Left ventricle myocardium inferior (tissue), 1 donor: ENCODE measurements at regions of chr11 and their contacts with region 1.

Region 1: DNA sequence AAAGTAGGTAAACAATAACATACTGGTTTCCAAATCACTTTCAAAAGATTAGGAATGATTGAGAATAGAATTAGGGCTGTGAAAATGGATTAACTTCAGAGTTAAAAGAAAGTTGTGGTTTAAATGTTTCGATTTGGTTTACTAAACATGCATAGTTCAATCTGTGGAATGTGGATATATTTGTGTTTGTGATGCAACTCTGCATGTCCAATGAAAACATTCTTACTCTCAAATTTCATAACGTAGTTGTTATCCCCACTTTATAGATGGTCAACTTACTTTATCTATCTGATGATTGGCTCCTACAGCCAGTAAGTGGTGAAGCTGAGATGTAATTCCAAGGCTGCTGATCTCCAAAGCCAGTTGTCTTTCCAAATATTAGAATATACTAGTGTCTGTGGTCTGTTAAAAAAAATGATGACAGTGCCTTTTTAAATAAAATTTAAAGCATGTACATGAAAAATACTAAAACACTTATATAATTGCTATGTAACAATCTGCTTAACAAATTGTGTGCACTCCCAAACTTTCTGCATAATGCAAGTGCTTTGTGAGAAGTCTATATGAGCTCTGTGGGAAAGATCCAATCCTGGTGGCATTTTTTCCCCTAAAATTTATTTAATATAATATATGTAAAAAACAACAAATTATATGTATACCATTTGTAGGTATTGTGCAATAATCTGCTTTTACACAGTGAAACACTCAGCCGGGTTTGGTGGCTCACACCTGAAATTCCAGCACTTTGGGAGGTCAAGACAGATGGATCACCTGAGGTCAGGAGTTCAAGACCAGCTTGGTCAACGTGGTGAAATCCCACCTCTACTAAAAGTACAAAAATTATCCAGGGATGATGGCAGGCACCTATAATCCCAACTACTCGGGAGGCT is 9.7 kb upstream of the SIK3 start:
- DNase-seq: no peak
- H3K4me3 ChIP-seq: no peak overlapping the region
- H3K27ac ChIP-seq: peak overlapping the region; percentile 70
- H3K4me1 ChIP-seq: peaks cover 8% of the 10 kb centered on the region
- H3K27me3 ChIP-seq: no peaks in the 10 kb centered on the region
- CTCF ChIP-seq: no peak

Region 2: GRCh38 chr11:116787786-116788486 is 320.0 kb before region 1 on chr11 and contains the start of gene ZPR1:
- intact Hi-C with region 1: loop called (anchors 5 kb)
- DNase-seq: peak; percentile 88
- H3K4me3 ChIP-seq: peak within 1 kb of the TSS; percentile 85
- H3K27ac ChIP-seq: peak within 1 kb of the TSS; percentile 89
- H3K4me1 ChIP-seq: peaks cover 33% of the 10 kb centered on the region
- H3K27me3 ChIP-seq: no peaks in the 10 kb centered on the region
- CTCF ChIP-seq: peak; percentile 17
- total RNA-seq, gene ZPR1: 26.4 TPM

Region 3: GRCh38 chr11:116879800-116880625 is 227.9 kb before region 1 on chr11:
- intact Hi-C with region 1: loop called (anchors 2 kb)
- DNase-seq: no peak
- H3K4me3 ChIP-seq: no peak overlapping the region
- H3K27ac ChIP-seq: no peak overlapping the region
- H3K4me1 ChIP-seq: peaks cover 28% of the 10 kb centered on the region
- H3K27me3 ChIP-seq: no peaks in the 10 kb centered on the region
- CTCF ChIP-seq: peak; percentile 76

Region 4: GRCh38 chr11:116901211-116901610 is 206.7 kb before region 1 on chr11:
- intact Hi-C with region 1: no loop called
- DNase-seq: peak; percentile 73
- H3K4me3 ChIP-seq: no peak overlapping the region
- H3K27ac ChIP-seq: peak overlapping the region; percentile 47
- H3K4me1 ChIP-seq: peaks cover 36% of the 10 kb centered on the region
- H3K27me3 ChIP-seq: no peaks in the 10 kb centered on the region
- CTCF ChIP-seq: no peak

Region 5: DNA sequence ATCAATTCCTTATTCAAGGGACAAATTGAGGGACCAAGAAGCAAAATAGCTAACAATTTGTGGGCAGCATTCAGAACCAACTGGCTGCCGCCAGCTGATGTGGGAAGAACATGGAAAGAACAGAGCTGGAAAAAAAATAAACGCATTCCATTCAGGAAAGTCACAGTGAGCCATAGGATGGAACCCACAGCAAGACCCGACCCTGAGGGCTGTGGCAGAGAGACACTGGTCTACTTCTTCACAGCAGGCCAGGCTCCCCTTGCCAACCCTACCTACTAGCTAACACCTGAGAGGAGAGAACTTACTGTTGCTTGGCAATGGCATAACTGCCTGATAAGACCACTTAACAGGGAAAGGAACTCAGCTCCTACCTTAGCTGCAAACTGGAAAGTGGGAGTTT is 147.0 kb before region 1 on chr11:
- intact Hi-C with region 1: no loop called
- DNase-seq: no peak
- H3K4me3 ChIP-seq: no peak overlapping the region
- H3K27ac ChIP-seq: no peak overlapping the region
- H3K4me1 ChIP-seq: peaks cover 53% of the 10 kb centered on the region
- H3K27me3 ChIP-seq: no peaks in the 10 kb centered on the region
- CTCF ChIP-seq: no peak